ENCODE measurements at regions of chr11 and their contacts with region 1.

Region 1: GRCh38 chr11:6627762-6628241 is 8.6 kb upstream of the TPP1 start:
- DNase-seq: no peak
- ATAC-seq: no peak
- H3K4me3 ChIP-seq: no peak overlapping the region
- H3K27ac ChIP-seq: no peak overlapping the region
- H3K4me1 ChIP-seq: peaks cover 24% of the 10 kb centered on the region
- H3K27me3 ChIP-seq: no peaks in the 10 kb centered on the region
- CTCF ChIP-seq: no peak
- POLR2A ChIP-seq: no peak

Region 2: DNA sequence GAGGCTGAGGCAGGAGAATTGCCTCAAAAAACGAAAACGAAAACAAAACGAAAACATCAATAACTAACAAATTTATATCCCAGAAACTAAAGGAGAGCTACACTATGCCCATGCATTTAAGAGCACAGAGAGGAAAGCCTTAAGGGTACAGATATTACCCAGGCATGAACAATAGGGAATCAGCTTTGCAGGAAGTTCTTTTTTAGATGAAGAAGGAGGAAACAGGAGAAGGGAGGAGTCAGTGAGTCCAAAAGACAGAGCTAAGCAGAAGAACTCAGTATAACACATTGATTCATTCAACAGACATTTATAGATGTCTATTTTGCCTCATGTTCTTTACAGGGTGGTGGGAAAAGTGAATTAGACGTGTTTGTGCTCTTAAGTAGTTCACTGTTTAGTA is 47.1 kb after region 1 on chr11:
- intact Hi-C with region 1: loop called (anchors 10 kb)
- DNase-seq: no peak
- ATAC-seq: no peak
- H3K4me3 ChIP-seq: no peak overlapping the region
- H3K27ac ChIP-seq: no peak overlapping the region
- H3K4me1 ChIP-seq: no peaks in the 10 kb centered on the region
- H3K27me3 ChIP-seq: no peaks in the 10 kb centered on the region
- CTCF ChIP-seq: no peak
- POLR2A ChIP-seq: no peak